Natural killer cell (primary cell): ENCODE measurements at regions of chr17 and their contacts with region 1.

Region 1: DNA sequence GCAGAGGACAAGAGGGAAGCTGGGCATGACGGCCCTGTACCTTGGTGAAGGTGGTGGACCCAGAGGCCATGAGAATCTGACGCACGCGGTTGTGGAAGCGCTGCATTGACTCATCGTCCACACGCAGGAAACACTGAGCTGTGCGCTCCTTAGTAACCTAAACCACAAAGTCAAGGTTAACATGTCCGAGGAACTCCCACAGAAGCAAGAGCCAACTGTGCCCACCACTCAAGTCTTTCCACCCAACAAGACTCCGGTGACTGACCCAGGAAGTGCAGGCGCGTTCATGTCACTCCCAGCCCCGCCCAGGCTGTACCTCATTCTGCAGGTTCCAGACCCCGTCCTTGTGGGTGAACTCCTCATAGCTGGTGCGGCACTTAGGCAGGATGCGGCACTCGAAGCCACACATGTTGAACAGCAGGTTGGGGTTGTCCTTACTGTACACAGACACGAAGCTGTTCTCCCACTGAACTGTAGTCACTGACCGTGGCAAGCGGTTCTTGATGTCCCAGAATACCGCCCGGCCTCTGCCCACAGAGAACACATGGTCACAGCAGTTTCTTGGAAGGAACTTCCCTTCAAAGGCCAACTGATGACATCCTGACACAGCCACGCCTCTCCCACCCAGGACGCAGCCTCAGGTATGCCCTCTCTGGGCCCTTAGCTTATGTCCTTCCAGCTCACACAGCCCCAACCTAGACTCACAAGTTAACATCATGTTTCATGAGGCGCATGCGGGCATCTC is 11.5 kb downstream of the PRPF8 start:
- DNase-seq: peak in 1 of 2 donors; percentile 47
- ATAC-seq: peak; percentile 23 to 38 (median 34)
- H3K4me3 ChIP-seq: no peak overlapping the region
- H3K4me3 Mint-ChIP-seq: no peak overlapping the region
- H3K27ac ChIP-seq: no peak overlapping the region
- H3K27ac Mint-ChIP-seq: no peak overlapping the region
- H3K4me1 ChIP-seq: no peaks in the 10 kb centered on the region
- H3K4me1 Mint-ChIP-seq: peaks cover 13 to 32% of the 10 kb centered on the region in 2 donors
- H3K27me3 ChIP-seq: no peaks in the 10 kb centered on the region
- H3K27me3 Mint-ChIP-seq: no peaks in the 10 kb centered on the region
- CTCF ChIP-seq: no peak

Region 2: DNA sequence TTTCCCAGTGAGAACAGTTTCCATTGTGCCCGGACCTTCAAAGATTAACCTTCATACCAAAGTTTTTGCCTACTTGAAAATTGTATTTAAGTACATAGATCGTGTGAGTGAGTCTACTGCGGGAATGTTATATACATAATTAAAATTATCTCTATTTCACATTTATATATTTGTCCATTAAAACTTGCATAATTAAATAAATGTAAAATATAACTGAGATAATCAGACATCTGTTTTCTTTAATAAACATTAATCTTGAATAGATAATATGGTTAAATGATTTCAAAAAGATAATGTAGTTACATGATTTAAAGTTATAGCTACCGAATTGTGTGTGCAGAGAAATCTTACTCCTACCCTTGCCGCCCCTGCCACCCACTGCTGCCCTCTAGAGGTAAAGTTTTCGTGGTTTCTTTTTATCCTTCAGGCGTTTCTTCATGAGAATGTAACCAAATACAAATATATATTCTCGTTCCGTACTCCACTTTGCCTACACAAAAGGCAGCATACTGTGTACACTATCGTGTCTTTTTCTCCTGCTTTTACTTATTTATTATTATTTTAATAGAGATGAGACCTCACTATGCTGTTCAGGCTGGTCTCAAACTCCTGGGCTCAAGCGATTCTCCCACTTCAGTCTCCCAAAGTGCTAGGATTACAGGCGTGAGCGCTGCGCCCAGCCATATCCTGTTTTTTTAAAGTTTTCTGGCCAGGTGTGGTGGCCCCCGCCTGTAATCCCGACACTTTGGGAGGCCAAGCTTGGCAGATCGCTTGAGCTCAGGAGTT is 192.2 kb after region 1 on chr17:
- intact Hi-C with region 1: loop called (anchors 1 kb)
- DNase-seq: peak; percentile 22 to 80
- ATAC-seq: peak; percentile 72 to 78 (median 72)
- H3K4me3 ChIP-seq: no peak overlapping the region
- H3K4me3 Mint-ChIP-seq: no peak overlapping the region
- H3K27ac ChIP-seq: no peak overlapping the region
- H3K27ac Mint-ChIP-seq: no peak overlapping the region
- H3K4me1 ChIP-seq: peaks cover 3% of the 10 kb centered on the region
- H3K4me1 Mint-ChIP-seq: peaks cover 2 to 7% of the 10 kb centered on the region in 2 donors
- H3K27me3 ChIP-seq: no peaks in the 10 kb centered on the region
- H3K27me3 Mint-ChIP-seq: no peaks in the 10 kb centered on the region
- CTCF ChIP-seq: peak; percentile 71